Transverse colon (tissue), 4 donors: ENCODE measurements at regions of chr1 and their contacts with region 1.

Region 1: GRCh38 chr1:208081972-208082371 is 162.2 kb downstream of the PLXNA2 start:
- DNase-seq: no peak
- H3K4me3 ChIP-seq: no peak overlapping the region
- H3K27ac ChIP-seq: no peak overlapping the region
- H3K4me1 ChIP-seq: peaks cover 0 to 12% (median 3%) of the 10 kb centered on the region in 4 donors
- H3K27me3 ChIP-seq: no peaks in the 10 kb centered on the region
- CTCF ChIP-seq: no peak
- EP300 ChIP-seq: no peak
- POLR2A ChIP-seq: no peak

Region 2: GRCh38 chr1:208029381-208030287 is 52.3 kb before region 1 on chr1:
- in situ Hi-C with region 1: no loop called
- intact Hi-C with region 1: loop called (anchors 10 kb)
- DNase-seq: peak; percentile 19
- H3K4me3 ChIP-seq: no peak overlapping the region
- H3K27ac ChIP-seq: peak overlapping the region; percentile 75 to 80 (median 76)
- H3K4me1 ChIP-seq: peaks cover 19 to 29% (median 21%) of the 10 kb centered on the region in 4 donors
- H3K27me3 ChIP-seq: no peaks in the 10 kb centered on the region
- CTCF ChIP-seq: no peak
- EP300 ChIP-seq: no peak
- POLR2A ChIP-seq: no peak

Region 3: GRCh38 chr1:208203127-208203847 is 121.3 kb after region 1 on chr1:
- in situ Hi-C with region 1: no loop called
- intact Hi-C with region 1: no loop called
- DNase-seq: peak; percentile 79
- H3K4me3 ChIP-seq: no peak overlapping the region
- H3K27ac ChIP-seq: peak overlapping the region; percentile 84 to 89 (median 84)
- H3K4me1 ChIP-seq: peaks cover 29 to 74% (median 52%) of the 10 kb centered on the region in 4 donors
- H3K27me3 ChIP-seq: no peaks in the 10 kb centered on the region
- CTCF ChIP-seq: no peak
- EP300 ChIP-seq: peak; percentile 14
- POLR2A ChIP-seq: no peak

Region 4: DNA sequence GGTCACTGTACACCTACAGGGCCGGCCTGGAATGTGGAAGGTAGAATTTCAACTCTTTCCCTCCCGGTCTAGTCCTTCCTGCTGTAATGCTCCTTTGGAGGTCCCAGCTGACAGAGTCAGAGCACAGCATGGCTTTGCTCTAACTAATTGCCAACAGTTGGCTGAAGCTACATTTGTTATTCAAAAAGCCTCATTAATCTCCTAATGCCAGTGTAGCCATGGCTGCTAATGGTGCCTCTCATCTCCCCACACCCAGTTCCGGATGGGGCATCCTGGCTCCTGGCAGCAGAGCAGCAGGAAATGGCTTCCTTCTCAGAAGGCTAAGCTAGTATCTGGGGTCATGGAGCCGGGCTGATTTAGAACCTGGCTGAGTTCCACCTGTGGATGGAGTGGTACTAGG is 1482.9 kb after region 1 on chr1:
- in situ Hi-C with region 1: no loop called
- intact Hi-C with region 1: loop called (anchors 5 kb)
- DNase-seq: no peak
- H3K4me3 ChIP-seq: no peak overlapping the region
- H3K27ac ChIP-seq: no peak overlapping the region
- H3K4me1 ChIP-seq: no peaks in the 10 kb centered on the region
- H3K27me3 ChIP-seq: peaks cover 12% of the 10 kb centered on the region
- CTCF ChIP-seq: no peak
- EP300 ChIP-seq: no peak
- POLR2A ChIP-seq: no peak